H1 (cell line): ENCODE measurements at regions of chr9 and their contacts with region 1.

Region 1: GRCh38 chr9:77977210-77977611 is 54.4 kb downstream of the GNAQ start:
- DNase-seq: peak in 1 of 2 experiments; percentile 44
- H3K4me3 ChIP-seq: no peak overlapping the region
- H3K27ac ChIP-seq: no peak overlapping the region; the same call in 1 of the 2 replicates
- H3K4me1 ChIP-seq: peaks cover 0 to 11% (median 10%) of the 10 kb centered on the region in 4 experiments; a peak in 3 of 7 replicates
- H3K27me3 ChIP-seq: no peaks in the 10 kb centered on the region
- CTCF ChIP-seq: peak; percentile 50 to 76 (median 75)
- EP300 ChIP-seq: no peak
- POLR2A ChIP-seq: no peak
- RAD21 ChIP-seq: peak; percentile 83 to 90

Region 2: GRCh38 chr9:77588271-77588937 is 388.8 kb before region 1 on chr9:
- CTCF ChIA-PET with region 1: no interaction called
- POLR2A ChIA-PET with region 1: no interaction called
- DNase-seq: no peak
- H3K4me3 ChIP-seq: no peak overlapping the region
- H3K27ac ChIP-seq: no peak overlapping the region
- H3K4me1 ChIP-seq: peaks cover 3 to 20% (median 13%) of the 10 kb centered on the region in 4 experiments; a peak in 4 of 7 replicates
- H3K27me3 ChIP-seq: no peaks in the 10 kb centered on the region
- CTCF ChIP-seq: no peak
- EP300 ChIP-seq: no peak
- POLR2A ChIP-seq: no peak
- RAD21 ChIP-seq: no peak

Region 3: GRCh38 chr9:77903666-77904285 is 73.4 kb before region 1 on chr9:
- CTCF ChIA-PET with region 1: interaction called, 18 read pairs
- POLR2A ChIA-PET with region 1: no interaction called
- DNase-seq: no peak
- H3K4me3 ChIP-seq: no peak overlapping the region
- H3K27ac ChIP-seq: no peak overlapping the region
- H3K4me1 ChIP-seq: peaks cover 0 to 5% (median 1%) of the 10 kb centered on the region in 4 experiments; a peak in 1 of 7 replicates
- H3K27me3 ChIP-seq: no peaks in the 10 kb centered on the region
- CTCF ChIP-seq: no peak
- EP300 ChIP-seq: no peak
- POLR2A ChIP-seq: no peak
- RAD21 ChIP-seq: no peak

Region 4: DNA sequence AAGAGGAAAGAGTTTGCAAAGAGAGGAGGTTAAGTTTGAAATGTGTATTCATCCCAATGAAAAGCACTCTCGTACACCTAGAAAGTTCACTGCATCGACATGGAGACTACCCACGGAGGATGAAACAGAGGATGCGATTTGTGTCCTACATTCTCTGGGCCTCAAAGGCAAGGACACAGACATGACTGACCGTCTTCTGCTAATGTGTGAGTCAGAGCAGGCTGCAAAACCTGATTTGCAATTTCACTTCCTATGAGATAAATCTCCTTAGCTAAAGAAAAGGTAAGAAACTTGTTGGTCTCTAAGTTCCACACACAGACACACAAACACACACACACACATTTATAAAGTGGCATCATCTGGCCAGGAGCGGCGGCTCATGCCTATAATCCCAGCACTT is 44.2 kb before region 1 on chr9:
- CTCF ChIA-PET with region 1: no interaction called
- POLR2A ChIA-PET with region 1: no interaction called
- DNase-seq: no peak
- H3K4me3 ChIP-seq: no peak overlapping the region
- H3K27ac ChIP-seq: no peak overlapping the region
- H3K4me1 ChIP-seq: no peaks in the 10 kb centered on the region; a peak in 1 of 7 replicates
- H3K27me3 ChIP-seq: no peaks in the 10 kb centered on the region
- CTCF ChIP-seq: no peak
- EP300 ChIP-seq: no peak
- POLR2A ChIP-seq: no peak
- RAD21 ChIP-seq: no peak

Region 5: DNA sequence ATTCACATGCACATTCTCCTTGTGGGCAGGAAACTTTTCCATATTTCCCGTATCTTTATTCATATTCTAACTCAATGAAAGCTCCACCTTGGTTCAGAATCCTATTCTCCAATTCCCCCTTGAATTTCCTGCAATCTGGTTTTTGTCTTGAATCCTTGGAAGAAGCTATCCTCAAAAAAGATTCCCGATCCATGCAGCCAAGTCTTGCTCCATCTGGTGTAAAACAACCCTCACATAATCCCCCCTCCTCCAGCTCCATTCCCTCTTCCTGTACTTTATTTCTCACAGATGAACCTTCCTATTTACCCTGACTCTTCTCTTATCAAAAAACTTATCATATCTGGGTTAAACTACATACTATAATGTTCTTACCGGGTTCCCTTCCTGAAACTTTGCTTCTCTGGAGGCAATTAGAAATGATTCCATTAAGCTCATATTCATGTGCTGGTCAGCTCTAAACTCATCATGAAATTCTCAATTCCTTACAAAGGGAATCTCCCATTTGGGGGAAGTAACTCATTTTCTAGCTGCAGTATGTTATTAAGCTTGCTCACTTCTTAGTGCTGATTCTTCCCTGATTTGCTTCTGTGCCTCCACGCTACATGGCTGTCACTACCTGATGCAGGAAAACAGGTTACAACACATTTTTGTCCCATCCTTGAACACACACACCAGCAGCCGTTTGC is 27.3 kb before region 1 on chr9:
- CTCF ChIA-PET with region 1: interaction called, 16 read pairs
- POLR2A ChIA-PET with region 1: no interaction called
- DNase-seq: no peak
- H3K4me3 ChIP-seq: no peak overlapping the region
- H3K27ac ChIP-seq: no peak overlapping the region
- H3K4me1 ChIP-seq: peaks cover under 1 to 4% (median 2%) of the 10 kb centered on the region in 4 experiments; a peak in 5 of 7 replicates
- H3K27me3 ChIP-seq: no peaks in the 10 kb centered on the region
- CTCF ChIP-seq: no peak
- EP300 ChIP-seq: no peak
- POLR2A ChIP-seq: no peak
- RAD21 ChIP-seq: no peak

Region 6: DNA sequence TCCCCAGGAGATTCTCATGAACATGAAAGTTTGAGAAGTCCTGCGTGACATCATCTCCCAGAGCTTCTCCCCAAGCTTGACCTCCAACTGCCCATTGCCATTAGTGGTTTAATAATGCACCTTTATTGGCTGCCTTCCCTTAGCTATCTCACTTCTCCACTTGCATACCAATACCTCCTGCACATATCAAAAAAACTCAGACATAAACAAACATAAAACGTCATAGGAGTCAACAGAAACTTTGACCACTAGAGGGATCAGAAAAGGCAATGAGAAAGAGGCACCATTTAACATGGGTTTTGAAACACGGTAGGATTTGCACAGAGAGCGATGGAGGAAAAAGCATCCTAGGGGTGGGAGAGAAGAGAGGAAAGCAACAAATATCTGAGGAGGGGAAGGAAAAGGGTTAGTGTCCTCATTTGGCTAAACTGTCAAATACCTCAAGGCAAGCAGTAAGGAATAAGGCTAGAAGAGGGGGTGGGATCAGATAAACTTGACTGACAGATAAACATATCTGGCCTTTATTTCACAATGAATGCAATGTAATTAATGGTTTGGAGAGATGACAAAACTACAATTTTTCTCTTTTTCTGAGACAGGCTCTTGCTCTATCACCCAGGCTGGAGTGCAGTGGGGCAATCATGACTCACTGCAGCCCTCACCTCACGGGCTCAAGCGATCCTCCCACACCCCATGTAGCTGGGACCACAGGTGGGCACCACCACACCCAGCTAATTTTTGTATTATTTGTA is 27.4 kb after region 1 on chr9:
- CTCF ChIA-PET with region 1: interaction called, 12 read pairs
- POLR2A ChIA-PET with region 1: no interaction called
- DNase-seq: no peak
- H3K4me3 ChIP-seq: no peak overlapping the region
- H3K27ac ChIP-seq: no peak overlapping the region
- H3K4me1 ChIP-seq: no peaks in the 10 kb centered on the region
- H3K27me3 ChIP-seq: no peaks in the 10 kb centered on the region
- CTCF ChIP-seq: peak in 1 of 3 experiments; percentile 15; a peak in 1 of 4 replicates
- EP300 ChIP-seq: no peak
- POLR2A ChIP-seq: no peak
- RAD21 ChIP-seq: no peak

Region 7: GRCh38 chr9:78053627-78054026 is 76.4 kb after region 1 on chr9:
- CTCF ChIA-PET with region 1: interaction called, 10 read pairs
- POLR2A ChIA-PET with region 1: no interaction called
- DNase-seq: no peak
- H3K4me3 ChIP-seq: no peak overlapping the region
- H3K27ac ChIP-seq: no peak overlapping the region
- H3K4me1 ChIP-seq: no peaks in the 10 kb centered on the region
- H3K27me3 ChIP-seq: no peaks in the 10 kb centered on the region
- CTCF ChIP-seq: no peak
- EP300 ChIP-seq: no peak
- POLR2A ChIP-seq: no peak
- RAD21 ChIP-seq: no peak